ENCODE measurements at regions of chr12 and their contacts with region 1.

Region 1: GRCh38 chr12:120200364-120200800 is 529 bp downstream of the RPLP0 start:
- DNase-seq: no peak
- ATAC-seq: no peak
- H3K4me3 Mint-ChIP-seq: peak overlapping the region; percentile 95
- H3K27ac Mint-ChIP-seq: peak overlapping the region; percentile 98
- H3K4me1 Mint-ChIP-seq: peaks cover 42% of the 10 kb centered on the region
- H3K27me3 Mint-ChIP-seq: no peaks in the 10 kb centered on the region
- CTCF ChIP-seq: no peak

Region 2: GRCh38 chr12:120139958-120140357 is 60.4 kb before region 1 on chr12:
- CTCF ChIA-PET with region 1: no interaction called
- POLR2A ChIA-PET with region 1: no interaction called
- intact Hi-C with region 1: no loop called
- DNase-seq: no peak
- ATAC-seq: no peak
- H3K4me3 Mint-ChIP-seq: no peak overlapping the region
- H3K27ac Mint-ChIP-seq: no peak overlapping the region
- H3K4me1 Mint-ChIP-seq: no peaks in the 10 kb centered on the region
- H3K27me3 Mint-ChIP-seq: no peaks in the 10 kb centered on the region
- CTCF ChIP-seq: no peak

Region 3: DNA sequence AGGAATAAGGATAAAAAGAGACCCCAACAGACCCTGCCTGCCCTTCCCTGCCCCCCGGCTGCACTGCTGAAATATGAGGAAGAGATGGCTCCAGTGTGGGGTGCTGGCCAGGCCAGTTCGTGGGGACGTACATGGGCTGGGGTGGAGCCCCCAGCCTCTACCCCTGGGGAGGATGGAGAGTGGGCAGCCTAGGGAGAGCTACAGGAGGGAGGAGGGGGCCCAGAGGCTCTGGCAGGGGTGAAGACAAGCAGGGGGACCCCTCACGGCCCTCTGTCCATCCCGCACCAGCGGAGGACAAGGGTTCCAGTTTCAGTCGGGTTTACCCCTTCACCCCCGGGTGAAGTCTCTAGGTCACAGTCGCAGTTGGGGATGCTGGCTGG is 11.5 kb after region 1 on chr12:
- CTCF ChIA-PET with region 1: no interaction called
- POLR2A ChIA-PET with region 1: interaction called, 17 read pairs
- intact Hi-C with region 1: no loop called
- DNase-seq: no peak
- ATAC-seq: no peak
- H3K4me3 Mint-ChIP-seq: no peak overlapping the region
- H3K27ac Mint-ChIP-seq: no peak overlapping the region
- H3K4me1 Mint-ChIP-seq: no peaks in the 10 kb centered on the region
- H3K27me3 Mint-ChIP-seq: peaks cover 1% of the 10 kb centered on the region
- CTCF ChIP-seq: no peak

Region 4: GRCh38 chr12:120249875-120250795 is 49.8 kb after region 1 on chr12:
- CTCF ChIA-PET with region 1: no interaction called
- POLR2A ChIA-PET with region 1: interaction called, 31 read pairs
- intact Hi-C with region 1: no loop called
- DNase-seq: no peak
- ATAC-seq: peak; percentile 69
- H3K4me3 Mint-ChIP-seq: no peak overlapping the region
- H3K27ac Mint-ChIP-seq: no peak overlapping the region
- H3K4me1 Mint-ChIP-seq: peaks cover 52% of the 10 kb centered on the region
- H3K27me3 Mint-ChIP-seq: peaks cover 32% of the 10 kb centered on the region
- CTCF ChIP-seq: no peak

Region 5: GRCh38 chr12:120301962-120302815 is 101.8 kb after region 1 on chr12 and contains the start of gene SIRT4:
- CTCF ChIA-PET with region 1: no interaction called
- POLR2A ChIA-PET with region 1: interaction called, 29 read pairs
- intact Hi-C with region 1: no loop called
- DNase-seq: peak; percentile 71
- ATAC-seq: peak; percentile 99
- H3K4me3 Mint-ChIP-seq: peak within 1 kb of the TSS; percentile 95
- H3K27ac Mint-ChIP-seq: peak within 1 kb of the TSS; percentile 86
- H3K4me1 Mint-ChIP-seq: peaks cover 8% of the 10 kb centered on the region
- H3K27me3 Mint-ChIP-seq: no peaks in the 10 kb centered on the region
- CTCF ChIP-seq: no peak
- total RNA-seq, gene SIRT4: 1.6 and 1.7 TPM in 2 replicates

Measured in activated B cell treated with CpG ODN at 0.5 μM for 24 hours (primary cell).